Esophagus muscularis mucosa (tissue), 4 donors: ENCODE measurements at regions of chr2 and their contacts with region 1.

Region 1: DNA sequence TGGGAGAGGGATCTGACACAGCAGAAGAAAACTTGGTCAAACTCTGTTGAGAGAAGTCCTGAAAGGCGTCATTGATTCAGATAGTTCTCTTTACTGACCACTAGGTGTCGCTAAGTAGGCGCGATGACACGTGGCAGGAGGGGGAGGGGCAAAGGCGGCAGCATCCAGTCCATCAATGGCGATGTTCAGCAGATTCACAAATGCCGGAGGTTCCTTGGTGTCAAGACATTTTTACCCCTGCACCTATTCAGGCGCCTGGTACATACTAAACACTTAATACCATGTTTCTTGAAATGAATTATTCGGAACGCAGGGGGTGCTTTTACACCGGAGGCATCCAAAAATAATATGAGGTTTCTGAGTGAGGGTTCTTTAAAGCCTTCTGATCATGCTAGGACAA is 3.0 kb upstream of the PLEK start:
- DNase-seq: no peak
- H3K4me3 ChIP-seq: peak overlapping the region in 1 of 4 donors; percentile 32
- H3K27ac ChIP-seq: no peak overlapping the region
- H3K4me1 ChIP-seq: peaks cover 0 to 5% (median 0%) of the 10 kb centered on the region in 4 donors
- H3K27me3 ChIP-seq: no peaks in the 10 kb centered on the region
- CTCF ChIP-seq: peak; percentile 62 to 71 (median 64)
- EP300 ChIP-seq: no peak
- POLR2A ChIP-seq: no peak

Region 2: GRCh38 chr2:68157402-68158133 is 204.5 kb before region 1 on chr2 and contains the start of gene PNO1:
- intact Hi-C with region 1: no loop called
- DNase-seq: peak; percentile 99
- H3K4me3 ChIP-seq: peak within 1 kb of the TSS; percentile 83 to 98 (median 92)
- H3K27ac ChIP-seq: peak within 1 kb of the TSS; percentile 83 to 94 (median 88)
- H3K4me1 ChIP-seq: peaks cover 27 to 47% (median 38%) of the 10 kb centered on the region in 4 donors
- H3K27me3 ChIP-seq: no peaks in the 10 kb centered on the region
- CTCF ChIP-seq: peak in 1 of 3 experiments; percentile 21
- EP300 ChIP-seq: no peak
- POLR2A ChIP-seq: no peak
- total RNA-seq, gene PNO1: 16.6 to 27.3 (median 22.2) TPM

Region 3: GRCh38 chr2:68225119-68225632 is 136.9 kb before region 1 on chr2:
- intact Hi-C with region 1: no loop called
- DNase-seq: no peak
- H3K4me3 ChIP-seq: no peak overlapping the region
- H3K27ac ChIP-seq: peak overlapping the region in 3 of 4 donors; percentile 33 to 62 (median 46)
- H3K4me1 ChIP-seq: peaks cover 30 to 72% (median 67%) of the 10 kb centered on the region in 4 donors
- H3K27me3 ChIP-seq: no peaks in the 10 kb centered on the region
- CTCF ChIP-seq: peak in 2 of 3 experiments; percentile 15 to 20
- EP300 ChIP-seq: no peak
- POLR2A ChIP-seq: no peak

Region 4: DNA sequence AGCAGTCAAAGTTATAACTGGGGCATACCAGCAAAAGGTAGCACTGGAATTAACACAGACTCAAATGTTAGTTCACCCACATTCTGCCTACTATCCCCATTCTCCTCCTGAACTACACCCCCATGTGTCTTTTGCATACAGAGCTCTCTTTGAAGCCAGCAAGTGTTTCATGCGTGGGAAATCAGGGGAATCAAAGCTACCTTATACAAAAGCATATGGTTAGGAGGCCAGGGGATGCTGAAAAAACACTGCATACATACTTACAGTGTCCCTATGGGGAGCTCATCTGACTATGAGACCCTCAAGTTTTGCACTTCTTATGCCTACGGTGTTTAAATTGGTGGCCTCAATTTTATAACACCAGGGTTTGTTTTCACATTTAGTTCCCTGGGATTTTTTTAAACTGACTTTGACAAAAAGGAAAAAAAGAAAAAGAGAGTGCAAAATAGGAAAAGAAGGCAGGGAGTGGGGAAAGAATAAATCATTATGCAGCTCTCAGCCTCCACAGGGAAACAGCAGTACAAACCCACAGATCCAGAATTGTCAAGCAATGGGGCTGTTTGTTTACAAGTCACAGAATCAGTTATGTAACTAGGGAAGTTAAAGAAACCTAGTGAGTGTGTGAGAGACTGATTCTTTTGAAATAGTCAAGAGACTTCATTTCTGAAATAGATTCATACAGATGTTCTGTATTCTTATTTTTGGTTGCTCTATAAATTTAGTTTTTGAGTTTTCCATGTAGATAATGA is 89.6 kb before region 1 on chr2:
- intact Hi-C with region 1: no loop called
- DNase-seq: no peak
- H3K4me3 ChIP-seq: no peak overlapping the region
- H3K27ac ChIP-seq: no peak overlapping the region
- H3K4me1 ChIP-seq: peaks cover 0 to 15% (median 4%) of the 10 kb centered on the region in 4 donors
- H3K27me3 ChIP-seq: no peaks in the 10 kb centered on the region
- CTCF ChIP-seq: no peak
- EP300 ChIP-seq: no peak
- POLR2A ChIP-seq: no peak

Region 5: DNA sequence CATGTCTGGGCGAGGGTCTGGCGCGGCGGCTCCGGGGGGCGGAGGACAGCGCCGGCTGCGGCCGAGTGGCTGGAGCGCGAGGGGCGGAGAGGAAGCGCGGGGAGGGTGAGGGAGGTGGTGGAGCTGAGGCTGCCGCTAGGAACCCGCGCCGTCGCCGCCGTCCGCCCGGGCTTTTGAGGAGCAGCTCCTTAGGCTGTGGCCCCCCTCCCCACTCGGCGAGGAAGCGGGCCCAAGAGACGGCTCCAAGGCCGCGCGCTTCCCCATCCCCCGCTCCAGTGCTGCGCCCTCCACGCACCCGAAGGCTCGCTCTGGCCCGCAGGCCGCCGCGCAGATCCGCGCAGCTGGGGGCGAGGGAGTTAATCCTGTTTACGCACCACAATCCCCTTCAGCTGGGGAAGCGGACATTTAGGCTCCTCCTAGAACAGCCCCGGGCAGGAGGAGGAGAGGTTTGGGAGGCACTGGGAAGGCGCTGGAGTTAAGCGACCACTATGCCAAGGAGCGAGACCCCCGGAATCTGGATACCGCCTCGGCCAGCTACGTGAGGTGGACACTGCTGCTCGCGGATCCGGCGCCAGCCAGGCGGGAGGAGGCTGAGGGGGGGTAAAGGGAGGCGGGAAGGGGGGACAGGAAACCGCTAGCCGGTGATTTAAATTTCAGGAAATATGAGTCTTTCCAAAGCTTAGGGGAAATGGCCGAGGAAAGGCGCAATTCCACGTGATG is 42.5 kb before region 1 on chr2 and contains the start of gene CNRIP1:
- intact Hi-C with region 1: no loop called
- DNase-seq: peak; percentile 92
- H3K4me3 ChIP-seq: peak within 1 kb of the TSS; percentile 84 to 93 (median 90)
- H3K27ac ChIP-seq: peak within 1 kb of the TSS; percentile 87 to 95 (median 92)
- H3K4me1 ChIP-seq: peaks cover 9 to 36% (median 23%) of the 10 kb centered on the region in 4 donors
- H3K27me3 ChIP-seq: no peaks in the 10 kb centered on the region
- CTCF ChIP-seq: no peak
- EP300 ChIP-seq: no peak
- POLR2A ChIP-seq: peak; percentile 54
- total RNA-seq, gene CNRIP1: 23.5 to 44.4 (median 29.8) TPM

Region 6: DNA sequence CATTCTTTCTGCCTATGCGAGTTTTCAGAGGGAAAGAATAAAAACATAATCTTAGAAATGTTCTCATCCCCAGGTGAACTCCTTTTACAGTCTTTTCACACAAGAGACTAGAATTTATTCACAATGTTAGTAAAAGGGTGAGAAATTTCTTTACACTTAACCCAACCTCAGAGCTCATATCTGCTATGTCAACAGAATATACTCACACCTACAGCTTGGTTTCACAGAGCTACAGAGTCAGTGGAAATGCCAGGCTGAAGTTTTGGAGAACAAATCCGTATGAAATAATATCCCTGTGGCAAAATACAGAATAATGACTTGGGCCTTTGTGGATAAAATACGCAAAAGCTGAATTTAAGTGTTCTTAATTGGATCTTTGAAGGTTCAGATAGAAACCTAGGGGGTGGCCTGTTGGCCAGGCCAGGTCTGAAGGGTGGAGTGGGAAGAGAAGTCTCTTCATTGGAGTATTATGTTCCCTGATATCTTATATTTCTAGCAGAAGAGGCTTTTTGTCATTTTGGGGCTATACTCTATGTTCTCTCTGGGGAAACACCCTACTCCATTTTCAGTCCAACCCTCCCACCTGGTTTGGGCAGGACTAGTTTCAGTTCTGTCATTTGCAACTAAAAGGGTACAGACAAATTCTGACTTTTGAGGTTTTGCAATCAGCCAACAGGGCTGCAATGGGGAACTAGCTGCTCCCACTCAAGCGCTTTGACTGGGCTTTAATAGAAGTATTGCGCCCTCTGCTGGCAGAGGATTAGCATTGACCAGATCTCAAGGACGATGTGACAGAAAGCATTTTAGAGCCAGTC is 79.3 kb after region 1 on chr2:
- intact Hi-C with region 1: loop called (anchors 5 kb)
- DNase-seq: peak; percentile 93
- H3K4me3 ChIP-seq: no peak overlapping the region
- H3K27ac ChIP-seq: peak overlapping the region in 2 of 4 donors; percentile 32 to 72
- H3K4me1 ChIP-seq: peaks cover 1 to 33% (median 18%) of the 10 kb centered on the region in 4 donors
- H3K27me3 ChIP-seq: no peaks in the 10 kb centered on the region
- CTCF ChIP-seq: peak; percentile 88 to 92 (median 91)
- EP300 ChIP-seq: no peak
- POLR2A ChIP-seq: no peak